Activated T-helper 2 cell treated with anti-CD3 and anti-CD28 coated beads, Interferon-gamma antibody, Interleukin-2, Interleukin-4, amounts not matched to agents 10 μg/mL and 5 μg/mL and 100 μg/mL, durations not matched to agents 14 hours and 24 hours and 36 hours (primary cell): ENCODE measurements at regions of chr13 and their contacts with region 1.

Region 1: DNA sequence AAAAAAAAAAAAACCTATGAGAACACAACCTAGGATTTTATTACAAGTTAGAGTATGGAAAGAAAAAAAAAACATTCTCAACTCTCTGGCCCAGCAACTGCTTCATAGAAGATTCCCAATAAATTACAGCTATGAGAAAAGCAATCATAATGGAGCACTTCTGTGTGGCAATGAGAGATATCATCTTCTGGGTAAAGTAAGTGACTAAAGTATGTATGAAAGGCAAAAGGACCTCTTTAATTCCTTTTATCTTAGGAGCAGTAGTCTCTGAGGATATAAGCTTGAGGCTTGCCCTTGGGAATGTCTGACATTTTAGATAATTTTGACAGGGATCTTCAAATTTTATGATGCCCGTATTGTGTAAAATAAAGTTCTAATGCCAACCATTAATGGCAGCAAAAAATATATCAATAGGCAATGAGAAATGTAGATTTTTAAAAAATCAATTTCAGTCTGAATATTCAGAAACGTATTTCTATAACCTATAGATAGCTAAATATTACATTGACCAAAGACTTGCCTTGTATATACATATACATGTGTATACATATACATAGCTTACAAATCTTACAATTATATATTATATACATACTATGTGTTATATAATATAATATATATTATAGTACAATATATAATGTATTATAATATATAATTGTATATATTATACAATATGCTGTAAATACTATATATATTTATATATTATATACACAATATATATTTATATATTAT is 823.9 kb upstream of the SLITRK1 start:
- DNase-seq: no peak
- H3K4me3 Mint-ChIP-seq: no peak overlapping the region
- H3K27ac Mint-ChIP-seq: no peak overlapping the region
- H3K4me1 Mint-ChIP-seq: no peaks in the 10 kb centered on the region
- H3K27me3 Mint-ChIP-seq: no peaks in the 10 kb centered on the region

Region 2: GRCh38 chr13:84230568-84230967 is 475.6 kb before region 1 on chr13:
- intact Hi-C with region 1: no loop called
- DNase-seq: no peak
- H3K4me3 Mint-ChIP-seq: no peak overlapping the region
- H3K27ac Mint-ChIP-seq: no peak overlapping the region
- H3K4me1 Mint-ChIP-seq: no peaks in the 10 kb centered on the region
- H3K27me3 Mint-ChIP-seq: no peaks in the 10 kb centered on the region

Region 3: DNA sequence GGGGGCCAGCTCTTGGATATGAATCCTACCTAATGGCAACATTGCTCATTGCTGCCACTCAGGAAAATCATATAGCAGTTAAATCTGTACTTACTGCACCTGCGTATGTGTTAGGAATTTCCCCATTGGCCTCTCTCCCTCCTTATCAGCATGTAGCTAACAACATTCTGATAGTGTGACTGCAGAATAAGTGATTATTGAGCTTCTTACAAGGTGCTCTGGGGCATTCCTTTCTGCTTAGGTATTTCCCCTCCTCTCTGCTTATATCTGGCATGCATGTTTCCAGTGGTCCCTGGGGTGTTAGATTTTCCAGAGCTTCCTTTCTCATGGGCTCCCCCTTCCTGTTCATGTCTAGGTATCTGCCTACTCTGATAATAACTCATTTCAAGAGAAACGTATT is 409.7 kb before region 1 on chr13:
- intact Hi-C with region 1: no loop called
- DNase-seq: no peak
- H3K4me3 Mint-ChIP-seq: no peak overlapping the region
- H3K27ac Mint-ChIP-seq: no peak overlapping the region
- H3K4me1 Mint-ChIP-seq: no peaks in the 10 kb centered on the region
- H3K27me3 Mint-ChIP-seq: no peaks in the 10 kb centered on the region

Region 4: DNA sequence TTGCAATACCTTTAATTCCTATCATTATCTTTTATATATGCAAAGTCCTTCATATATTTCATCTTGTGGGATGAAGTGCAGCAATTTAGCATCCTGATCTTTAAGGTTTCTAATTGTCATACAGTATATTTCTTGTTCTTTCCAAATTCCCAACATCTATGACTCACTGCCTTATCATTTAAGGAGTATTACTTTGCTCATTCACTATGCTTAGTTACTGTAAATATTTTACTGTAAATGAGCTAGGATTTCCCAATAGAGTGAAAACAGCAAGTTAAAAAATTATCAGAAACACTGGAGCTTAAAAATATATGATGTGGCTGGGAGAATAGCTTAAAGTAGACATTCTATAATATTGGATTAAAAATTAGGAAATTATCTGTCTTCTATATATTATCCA is 1023.1 kb after region 1 on chr13:
- intact Hi-C with region 1: loop called (anchors 10 kb)
- DNase-seq: no peak
- H3K4me3 Mint-ChIP-seq: no peak overlapping the region
- H3K27ac Mint-ChIP-seq: no peak overlapping the region
- H3K4me1 Mint-ChIP-seq: no peaks in the 10 kb centered on the region
- H3K27me3 Mint-ChIP-seq: no peaks in the 10 kb centered on the region